Spleen (tissue), 13 donors: ENCODE measurements at regions of chr14 and their contacts with region 1.

Region 1: DNA sequence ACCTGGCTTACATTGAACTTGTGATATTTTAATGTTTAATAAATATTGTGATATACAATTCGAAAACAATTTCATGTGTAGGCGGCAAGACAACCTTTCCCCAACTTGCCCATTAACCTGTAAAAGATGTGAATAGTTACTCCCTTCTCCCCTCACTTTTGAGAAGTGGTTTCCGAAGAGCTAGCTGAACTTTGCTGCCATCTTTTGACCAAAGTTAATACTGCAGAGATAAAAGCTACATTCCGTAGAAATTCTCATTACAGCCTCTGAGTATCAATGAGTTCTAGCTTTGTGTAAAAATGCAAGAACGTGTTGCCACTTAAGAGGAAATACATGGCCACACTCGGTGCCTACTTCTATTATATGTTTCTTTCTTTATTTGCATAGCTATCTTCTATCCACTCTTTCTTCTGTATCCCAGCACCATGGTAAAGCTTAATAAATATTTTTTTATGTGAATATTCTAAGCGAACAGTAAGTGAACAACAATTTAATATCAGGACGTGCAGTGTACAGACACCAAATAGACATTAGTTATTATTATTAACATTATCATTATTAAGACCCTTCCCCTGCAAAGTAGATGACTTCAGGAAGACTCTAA is 105.1 kb upstream of the TMEM260 start:
- DNase-seq: no peak
- H3K4me3 ChIP-seq: no peak overlapping the region
- H3K27ac ChIP-seq: no peak overlapping the region
- H3K4me1 ChIP-seq: no peaks in the 10 kb centered on the region
- H3K27me3 ChIP-seq: peaks cover 0 to 7% (median 0%) of the 10 kb centered on the region in 7 donors
- CTCF ChIP-seq: peak; percentile 36 to 74 (median 66)
- POLR2A ChIP-seq: no peak

Region 2: GRCh38 chr14:55446218-55446654 is 1028.3 kb before region 1 on chr14:
- intact Hi-C with region 1: loop called (anchors 5 kb)
- DNase-seq: no peak
- H3K4me3 ChIP-seq: no peak overlapping the region
- H3K27ac ChIP-seq: no peak overlapping the region
- H3K4me1 ChIP-seq: peaks cover 0 to 4% (median 3%) of the 10 kb centered on the region in 6 donors
- H3K27me3 ChIP-seq: no peaks in the 10 kb centered on the region
- CTCF ChIP-seq: peak; percentile 16 to 70 (median 63)
- POLR2A ChIP-seq: no peak

Region 3: GRCh38 chr14:56687123-56687522 is 212.6 kb after region 1 on chr14:
- intact Hi-C with region 1: no loop called
- DNase-seq: no peak
- H3K4me3 ChIP-seq: no peak overlapping the region
- H3K27ac ChIP-seq: no peak overlapping the region
- H3K4me1 ChIP-seq: no peaks in the 10 kb centered on the region
- H3K27me3 ChIP-seq: no peaks in the 10 kb centered on the region
- CTCF ChIP-seq: no peak
- POLR2A ChIP-seq: no peak